OCI-LY7 (cell line): ENCODE measurements at regions of chr17 and their contacts with region 1.

Region 1: GRCh38 chr17:28071891-28072606 is 29.6 kb downstream of the NLK start:
- DNase-seq: peak; percentile 65
- H3K4me3 ChIP-seq: no peak overlapping the region
- H3K27ac ChIP-seq: peak overlapping the region; percentile 30
- H3K4me1 ChIP-seq: peaks cover 53% of the 10 kb centered on the region
- CTCF ChIP-seq: no peak

Region 2: GRCh38 chr17:28041068-28041843 is 30.8 kb before region 1 on chr17:
- CTCF ChIA-PET with region 1: no interaction called
- POLR2A ChIA-PET with region 1: interaction called, 5 read pairs
- intact Hi-C with region 1: loop called (anchors 2 kb)
- DNase-seq: peak; percentile 99
- H3K4me3 ChIP-seq: peak overlapping the region; percentile 87
- H3K27ac ChIP-seq: peak overlapping the region; percentile 65
- H3K4me1 ChIP-seq: peaks cover 48% of the 10 kb centered on the region
- CTCF ChIP-seq: no peak

Region 3: DNA sequence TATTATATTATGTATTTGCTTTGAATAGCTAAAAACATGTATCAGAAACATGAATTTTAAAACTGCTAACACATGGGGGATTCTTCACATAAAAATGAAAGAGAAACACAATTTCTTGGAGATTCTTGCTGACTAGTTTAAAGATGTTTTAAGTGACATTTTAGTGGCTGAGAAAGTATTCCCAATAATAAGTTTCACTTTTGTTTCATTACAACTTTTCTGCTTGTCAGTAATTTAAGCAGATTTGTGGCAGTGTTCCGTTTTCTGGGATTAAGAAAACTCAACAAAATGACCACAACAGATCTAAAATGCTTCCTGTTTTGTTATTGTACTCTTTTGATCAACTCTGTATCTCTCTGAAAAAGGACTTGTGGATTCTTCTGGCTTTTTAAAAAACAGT is 46.3 kb after region 1 on chr17:
- CTCF ChIA-PET with region 1: no interaction called
- POLR2A ChIA-PET with region 1: no interaction called
- intact Hi-C with region 1: loop called (anchors 5 kb)
- DNase-seq: no peak
- H3K4me3 ChIP-seq: no peak overlapping the region
- H3K27ac ChIP-seq: no peak overlapping the region
- H3K4me1 ChIP-seq: no peaks in the 10 kb centered on the region
- CTCF ChIP-seq: no peak

Region 4: GRCh38 chr17:28133562-28133970 is 61.5 kb after region 1 on chr17:
- CTCF ChIA-PET with region 1: no interaction called
- POLR2A ChIA-PET with region 1: no interaction called
- intact Hi-C with region 1: no loop called
- DNase-seq: no peak
- H3K4me3 ChIP-seq: no peak overlapping the region
- H3K27ac ChIP-seq: no peak overlapping the region
- H3K4me1 ChIP-seq: no peaks in the 10 kb centered on the region
- CTCF ChIP-seq: no peak